Activated CD4-positive, alpha-beta T cell treated with anti-CD3 and anti-CD28 coated beads, Interleukin-2, amount 10 ng/mL, durations not matched to agents 24 days and 14 days (primary cell): ENCODE measurements at regions of chr2 and their contacts with region 1.

Region 1: DNA sequence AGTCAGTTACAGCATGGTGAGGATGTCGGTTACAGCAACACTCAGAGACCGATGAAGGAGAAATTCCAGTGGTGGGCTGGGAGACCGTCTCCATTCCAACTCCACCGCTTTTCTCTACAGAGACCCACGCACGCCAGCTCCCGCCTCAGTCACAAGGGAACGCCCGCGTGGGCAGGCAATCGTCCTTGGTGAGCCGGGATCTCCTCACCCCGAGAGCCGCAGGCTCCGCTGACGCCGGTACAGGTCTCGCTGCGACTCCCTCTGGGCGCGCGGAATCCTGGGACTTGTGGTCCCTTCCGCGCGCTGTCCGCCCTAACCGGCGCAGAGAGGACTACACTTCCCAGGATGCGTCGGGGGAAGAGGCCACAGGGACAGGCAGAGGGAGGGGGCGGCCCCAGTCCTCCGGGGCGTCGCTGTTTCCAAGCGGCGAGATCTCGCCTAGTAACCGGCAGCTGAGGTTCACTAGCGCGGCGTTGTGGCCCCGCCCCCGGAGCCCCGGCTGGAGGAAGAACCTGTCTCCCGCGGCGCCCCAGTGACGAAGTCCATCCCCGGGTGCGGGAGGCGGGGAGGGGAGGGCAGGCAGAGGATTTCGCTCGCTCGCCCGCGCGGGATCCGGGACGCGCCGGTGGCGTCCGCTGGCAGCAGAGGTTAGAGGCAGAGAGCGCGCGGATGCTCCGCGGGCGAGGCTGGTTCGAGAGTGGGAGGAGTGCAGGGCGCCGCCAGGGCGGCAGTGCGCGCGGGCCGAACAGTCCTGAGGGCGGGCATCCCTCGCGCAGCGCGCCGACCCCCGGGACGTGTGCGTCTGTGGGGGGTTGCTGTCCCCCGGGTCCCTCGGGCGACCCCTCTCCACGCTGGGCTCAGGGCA is at the start of gene EML6:
- DNase-seq: peak; percentile 100
- H3K4me3 Mint-ChIP-seq: peak within 1 kb of the TSS; percentile 96
- H3K27ac Mint-ChIP-seq: peak within 1 kb of the TSS; percentile 82
- H3K4me1 Mint-ChIP-seq: peaks cover 13% of the 10 kb centered on the region
- H3K27me3 Mint-ChIP-seq: peaks cover 73% of the 10 kb centered on the region
- total RNA-seq, gene EML6: 0.77 and 0.83 TPM in 2 replicates

Region 2: DNA sequence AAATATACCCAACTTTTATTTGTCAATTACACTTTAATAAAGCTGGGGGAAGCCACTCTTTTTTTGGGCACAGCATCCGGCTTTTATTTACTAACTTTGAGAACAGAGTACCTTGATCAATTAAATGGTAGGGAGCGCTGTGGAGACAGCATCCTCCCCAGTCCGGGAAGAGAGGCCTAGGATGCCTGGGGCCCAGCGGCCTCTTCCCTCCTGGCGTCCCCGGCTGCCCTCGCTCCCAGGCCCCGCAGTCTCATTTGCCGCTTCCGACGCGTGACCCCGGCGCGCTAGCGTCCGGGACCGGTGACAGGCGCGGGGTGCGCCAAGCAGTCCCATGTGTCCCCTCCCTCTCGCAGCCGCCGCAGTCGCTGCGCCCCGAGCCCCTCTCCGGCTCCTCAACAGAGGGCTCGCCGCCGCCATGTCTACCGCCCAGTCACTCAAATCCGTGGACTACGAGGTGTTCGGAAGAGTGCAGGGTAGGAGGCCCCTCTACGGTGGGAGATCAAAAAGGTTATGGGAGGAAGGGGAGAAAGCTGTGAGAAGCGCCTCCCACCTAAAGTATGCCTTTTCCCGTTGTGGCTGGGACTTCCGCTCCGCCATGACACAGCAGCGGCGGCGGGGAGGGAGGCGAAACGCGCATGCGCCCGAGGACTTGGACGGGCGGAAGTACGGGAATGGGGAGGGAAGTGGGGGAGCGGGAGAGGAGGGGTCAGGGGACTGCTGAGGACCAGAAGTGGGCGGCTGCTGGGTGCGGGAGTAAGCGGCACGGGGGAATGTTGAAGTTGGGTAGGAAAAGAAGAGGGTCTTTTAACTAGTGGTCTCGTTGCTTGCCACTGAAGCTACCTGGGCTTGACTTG is 607.9 kb before region 1 on chr2 and contains the start of gene ACYP2:
- intact Hi-C with region 1: loop called (anchors 1 kb)
- DNase-seq: peak; percentile 97
- H3K4me3 Mint-ChIP-seq: peak within 1 kb of the TSS; percentile 98
- H3K27ac Mint-ChIP-seq: peak within 1 kb of the TSS; percentile 100
- H3K4me1 Mint-ChIP-seq: peaks cover 17% of the 10 kb centered on the region
- H3K27me3 Mint-ChIP-seq: peaks cover 9% of the 10 kb centered on the region
- total RNA-seq, gene ACYP2: 4.0 and 5.9 TPM in 2 replicates

Region 3: GRCh38 chr2:54522624-54523281 is 200.6 kb before region 1 on chr2:
- intact Hi-C with region 1: loop called (anchors 5 kb)
- DNase-seq: peak; percentile 90
- H3K4me3 Mint-ChIP-seq: no peak overlapping the region
- H3K27ac Mint-ChIP-seq: no peak overlapping the region
- H3K4me1 Mint-ChIP-seq: peaks cover 17% of the 10 kb centered on the region
- H3K27me3 Mint-ChIP-seq: peaks cover 21% of the 10 kb centered on the region

Region 4: GRCh38 chr2:54680397-54681041 is 42.8 kb before region 1 on chr2:
- intact Hi-C with region 1: loop called (anchors 1 kb)
- DNase-seq: peak; percentile 80
- H3K4me3 Mint-ChIP-seq: peak overlapping the region; percentile 77
- H3K27ac Mint-ChIP-seq: peak overlapping the region; percentile 63
- H3K4me1 Mint-ChIP-seq: peaks cover 49% of the 10 kb centered on the region
- H3K27me3 Mint-ChIP-seq: peaks cover 47% of the 10 kb centered on the region

Region 5: DNA sequence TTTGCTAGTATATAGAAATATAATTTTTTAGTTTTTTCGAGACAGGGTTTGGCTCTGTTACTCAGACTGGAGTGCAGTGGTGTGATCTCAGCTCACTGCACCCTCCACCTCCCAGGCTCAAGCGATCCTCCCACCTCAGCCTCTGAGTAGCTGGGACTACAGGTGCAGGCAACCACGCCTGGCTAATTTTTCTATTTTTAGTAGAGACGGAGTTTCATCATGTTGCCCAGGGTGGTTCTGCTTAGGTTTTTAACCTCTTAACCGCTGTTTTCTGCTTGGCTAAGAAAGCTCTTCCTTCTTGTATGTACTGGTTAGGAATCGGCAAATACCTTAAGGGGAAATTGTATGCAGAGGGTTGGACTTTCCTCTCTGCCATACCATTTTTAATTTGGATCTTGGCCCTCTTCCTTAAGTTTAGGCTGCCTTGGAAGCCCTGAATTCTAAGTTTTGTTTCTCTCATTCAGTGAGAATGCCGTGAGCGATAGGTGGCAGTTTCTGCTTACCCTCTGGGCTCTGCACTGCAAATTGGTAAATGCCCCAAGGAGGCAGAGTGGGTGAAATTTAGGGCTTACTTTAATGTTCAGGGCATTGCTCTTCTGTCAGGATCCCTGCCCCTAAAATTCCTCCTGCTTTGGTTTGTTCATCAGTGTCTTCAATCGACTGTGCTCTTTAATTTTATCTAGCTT is 32.4 kb after region 1 on chr2:
- intact Hi-C with region 1: no loop called
- DNase-seq: peak; percentile 15
- H3K4me3 Mint-ChIP-seq: no peak overlapping the region
- H3K27ac Mint-ChIP-seq: no peak overlapping the region
- H3K4me1 Mint-ChIP-seq: peaks cover 2% of the 10 kb centered on the region
- H3K27me3 Mint-ChIP-seq: peaks cover 12% of the 10 kb centered on the region

Region 6: DNA sequence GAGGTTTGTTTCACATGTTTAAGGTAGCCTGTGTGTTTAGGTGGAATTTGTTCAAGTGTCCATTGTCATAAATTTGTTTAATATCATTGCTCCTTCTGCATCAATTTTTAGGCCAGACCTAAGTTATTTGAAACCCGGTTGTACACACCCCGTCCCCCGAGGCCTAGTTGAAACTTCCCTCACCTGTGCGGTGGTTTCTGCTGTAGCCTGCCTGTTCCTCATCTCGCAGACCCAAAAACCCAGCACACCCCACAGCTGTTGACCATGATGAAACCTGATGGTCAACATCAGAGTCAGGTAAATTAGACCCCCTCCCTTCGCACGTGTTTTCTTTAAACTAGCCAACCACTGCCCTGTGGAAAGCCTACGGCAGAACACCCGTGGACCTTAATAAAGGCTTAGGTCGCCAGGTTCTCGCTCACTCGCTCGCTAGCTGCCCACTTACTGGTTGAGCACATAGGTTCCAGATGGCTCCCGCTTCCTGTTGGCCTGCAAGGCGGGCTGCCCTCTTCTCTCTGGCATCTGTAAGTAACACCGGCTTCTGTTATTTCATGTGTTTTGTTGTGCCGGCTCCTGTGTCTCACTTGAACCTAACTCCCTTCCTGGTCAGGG is 64.5 kb after region 1 on chr2:
- intact Hi-C with region 1: no loop called
- DNase-seq: no peak
- H3K4me3 Mint-ChIP-seq: no peak overlapping the region
- H3K27ac Mint-ChIP-seq: no peak overlapping the region
- H3K4me1 Mint-ChIP-seq: no peaks in the 10 kb centered on the region
- H3K27me3 Mint-ChIP-seq: peaks cover 5% of the 10 kb centered on the region

Region 7: DNA sequence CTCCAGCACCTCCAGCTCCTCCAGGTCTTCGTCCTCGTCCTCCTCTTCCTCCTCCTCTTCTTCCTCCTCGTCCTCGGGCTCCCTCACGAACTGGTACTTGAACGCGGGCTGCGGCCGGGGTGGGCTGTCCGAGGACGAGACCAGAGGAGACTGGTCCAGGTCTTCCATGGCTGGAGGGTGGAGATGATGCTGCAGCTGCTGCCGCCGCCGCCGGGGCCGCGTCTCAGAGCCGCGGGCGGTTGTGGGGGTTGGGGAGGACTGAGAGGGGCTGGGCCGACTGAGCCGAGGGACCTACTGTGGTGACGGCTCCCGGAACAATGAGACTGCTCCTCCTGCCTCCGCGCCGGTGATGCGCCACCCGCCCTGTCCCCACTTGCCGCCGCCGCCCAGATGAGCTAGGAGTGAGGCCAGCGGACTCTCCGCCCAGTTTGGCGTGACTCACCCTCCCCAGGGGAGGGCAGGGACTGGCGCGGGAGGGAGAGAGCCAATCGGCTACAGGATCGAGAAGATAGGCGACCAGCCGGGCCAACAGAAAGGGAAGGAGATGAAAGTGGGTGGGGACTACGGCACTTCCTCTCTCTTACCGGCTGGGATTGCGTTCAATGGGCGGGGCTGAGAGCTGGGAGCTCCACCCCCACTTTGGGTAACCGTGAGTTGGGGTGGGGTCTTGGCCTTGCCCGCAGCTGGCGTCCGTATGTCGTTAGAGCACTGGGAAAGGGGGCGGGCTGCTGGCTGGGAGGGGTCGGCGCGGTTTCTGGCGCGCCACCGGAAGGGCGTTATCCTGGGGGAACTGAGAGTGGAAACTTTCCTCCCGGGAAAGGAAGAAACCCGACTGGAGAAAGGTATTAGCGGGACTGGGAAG is 327.0 kb after region 1 on chr2 and contains the start of gene RTN4:
- intact Hi-C with region 1: loop called (anchors 5 kb)
- DNase-seq: peak; percentile 99
- H3K4me3 Mint-ChIP-seq: peak within 1 kb of the TSS; percentile 97
- H3K27ac Mint-ChIP-seq: peak within 1 kb of the TSS; percentile 97
- H3K4me1 Mint-ChIP-seq: peaks cover 48% of the 10 kb centered on the region
- H3K27me3 Mint-ChIP-seq: no peaks in the 10 kb centered on the region
- total RNA-seq, gene RTN4: 86.9 and 90.1 TPM in 2 replicates

Region 8: GRCh38 chr2:55419679-55420438 is 696.5 kb after region 1 on chr2 and contains the start of gene CCDC88A:
- intact Hi-C with region 1: loop called (anchors 5 kb)
- DNase-seq: peak; percentile 95
- H3K4me3 Mint-ChIP-seq: peak within 1 kb of the TSS; percentile 90
- H3K27ac Mint-ChIP-seq: peak within 1 kb of the TSS; percentile 70
- H3K4me1 Mint-ChIP-seq: peaks cover 17% of the 10 kb centered on the region
- H3K27me3 Mint-ChIP-seq: peaks cover 37% of the 10 kb centered on the region
- total RNA-seq, gene CCDC88A: 9.5 and 9.8 TPM in 2 replicates